T-cell (primary cell): ENCODE measurements at regions of chr1 and their contacts with region 1.

Region 1: GRCh38 chr1:110024613-110025012 is 9.8 kb upstream of the STRIP1 start:
- DNase-seq: no peak
- ATAC-seq: no peak
- H3K4me3 ChIP-seq: no peak overlapping the region
- H3K4me3 Mint-ChIP-seq: no peak overlapping the region
- H3K27ac ChIP-seq: no peak overlapping the region
- H3K27ac Mint-ChIP-seq: no peak overlapping the region
- H3K4me1 ChIP-seq: peaks cover 0 to 3% of the 10 kb centered on the region in 2 experiments
- H3K4me1 Mint-ChIP-seq: peaks cover 0 to 2% (median 1%) of the 10 kb centered on the region in 3 donors
- H3K27me3 ChIP-seq: no peaks in the 10 kb centered on the region
- H3K27me3 Mint-ChIP-seq: no peaks in the 10 kb centered on the region

Region 2: DNA sequence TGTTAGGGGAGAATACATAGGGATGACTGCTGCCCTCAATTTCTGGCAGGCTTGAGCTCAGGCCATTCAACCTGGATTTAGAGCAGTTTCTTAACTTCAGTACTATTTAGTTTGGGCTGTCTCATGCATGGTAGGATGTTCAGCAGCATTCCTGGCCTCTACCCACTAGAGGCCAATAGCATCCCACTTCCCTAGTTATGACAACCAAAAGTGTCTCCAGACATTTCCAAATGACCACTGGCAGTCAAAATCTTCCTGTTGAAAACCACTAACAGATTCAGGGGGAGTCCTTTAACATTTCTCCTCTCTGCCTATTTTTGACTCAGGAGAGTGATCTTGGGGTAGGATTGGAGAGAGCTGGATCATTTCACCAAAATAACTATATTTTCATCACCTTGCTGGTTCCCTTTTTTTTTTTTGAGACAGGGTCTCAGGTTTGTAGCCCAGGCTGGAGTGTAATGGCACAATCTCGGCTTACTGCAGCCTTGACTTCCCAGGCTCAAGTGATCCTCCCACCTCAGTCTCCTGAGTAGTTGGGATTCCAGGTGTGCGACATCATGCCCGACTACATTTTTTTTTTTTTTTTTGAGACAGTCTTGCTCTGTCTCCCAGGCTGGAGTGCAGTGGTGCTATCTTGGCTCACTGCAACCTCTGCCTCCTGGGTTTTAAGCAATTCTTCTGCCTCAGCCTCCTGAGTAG is 413.9 kb before region 1 on chr1:
- CTCF ChIA-PET with region 1: no interaction called
- POLR2A ChIA-PET with region 1: no interaction called
- DNase-seq: no peak
- ATAC-seq: no peak
- H3K4me3 ChIP-seq: no peak overlapping the region
- H3K4me3 Mint-ChIP-seq: no peak overlapping the region
- H3K27ac ChIP-seq: no peak overlapping the region
- H3K27ac Mint-ChIP-seq: no peak overlapping the region
- H3K4me1 ChIP-seq: peaks cover under 1 to 3% of the 10 kb centered on the region in 2 experiments
- H3K4me1 Mint-ChIP-seq: peaks cover 1 to 3% (median 2%) of the 10 kb centered on the region in 3 donors
- H3K27me3 ChIP-seq: no peaks in the 10 kb centered on the region
- H3K27me3 Mint-ChIP-seq: no peaks in the 10 kb centered on the region

Region 3: DNA sequence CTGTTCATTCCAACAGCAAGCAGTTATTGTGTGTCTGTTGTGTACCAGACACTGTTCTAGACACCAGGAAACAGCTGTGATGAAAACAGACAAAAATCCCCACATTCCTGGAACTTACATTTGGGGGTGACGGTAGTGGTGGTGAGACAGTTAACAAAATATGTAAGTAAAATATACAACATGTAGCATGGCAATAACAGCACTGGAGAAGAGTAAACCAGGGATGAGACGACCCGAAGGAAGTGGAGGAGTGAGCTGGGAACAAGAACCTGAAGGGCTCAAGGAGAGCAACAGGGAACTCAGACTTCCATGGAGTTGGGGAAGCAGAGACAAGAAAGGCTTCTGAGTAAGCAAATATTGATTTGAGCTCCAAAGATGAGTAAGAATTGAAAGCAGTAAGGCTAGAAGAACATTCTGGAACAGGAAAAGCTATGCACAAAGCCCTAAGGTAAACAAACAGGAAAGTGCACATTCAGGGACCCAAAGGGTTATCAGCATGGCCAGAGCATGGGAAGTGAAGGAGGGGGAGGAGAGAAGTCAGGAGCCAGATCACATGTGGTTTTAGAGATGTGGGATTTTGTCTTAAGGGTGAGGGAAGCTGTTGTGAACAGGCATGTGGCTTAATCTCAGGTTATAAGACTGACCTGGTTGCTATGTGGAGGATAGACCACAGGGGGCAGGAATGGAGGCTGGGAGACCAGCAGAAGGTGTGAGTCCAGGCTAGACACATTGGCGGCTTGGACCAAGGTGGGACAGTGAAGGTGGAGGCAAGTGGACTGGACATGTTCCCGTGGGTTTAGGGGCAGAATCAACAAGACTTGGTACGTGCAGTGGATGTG is 106.6 kb before region 1 on chr1:
- CTCF ChIA-PET with region 1: no interaction called
- POLR2A ChIA-PET with region 1: no interaction called
- DNase-seq: no peak
- ATAC-seq: no peak
- H3K4me3 ChIP-seq: no peak overlapping the region
- H3K4me3 Mint-ChIP-seq: no peak overlapping the region
- H3K27ac ChIP-seq: no peak overlapping the region
- H3K27ac Mint-ChIP-seq: no peak overlapping the region
- H3K4me1 ChIP-seq: peaks cover 0 to 8% of the 10 kb centered on the region in 2 experiments
- H3K4me1 Mint-ChIP-seq: peaks cover 14 to 19% (median 18%) of the 10 kb centered on the region in 3 donors
- H3K27me3 ChIP-seq: no peaks in the 10 kb centered on the region
- H3K27me3 Mint-ChIP-seq: no peaks in the 10 kb centered on the region

Region 4: DNA sequence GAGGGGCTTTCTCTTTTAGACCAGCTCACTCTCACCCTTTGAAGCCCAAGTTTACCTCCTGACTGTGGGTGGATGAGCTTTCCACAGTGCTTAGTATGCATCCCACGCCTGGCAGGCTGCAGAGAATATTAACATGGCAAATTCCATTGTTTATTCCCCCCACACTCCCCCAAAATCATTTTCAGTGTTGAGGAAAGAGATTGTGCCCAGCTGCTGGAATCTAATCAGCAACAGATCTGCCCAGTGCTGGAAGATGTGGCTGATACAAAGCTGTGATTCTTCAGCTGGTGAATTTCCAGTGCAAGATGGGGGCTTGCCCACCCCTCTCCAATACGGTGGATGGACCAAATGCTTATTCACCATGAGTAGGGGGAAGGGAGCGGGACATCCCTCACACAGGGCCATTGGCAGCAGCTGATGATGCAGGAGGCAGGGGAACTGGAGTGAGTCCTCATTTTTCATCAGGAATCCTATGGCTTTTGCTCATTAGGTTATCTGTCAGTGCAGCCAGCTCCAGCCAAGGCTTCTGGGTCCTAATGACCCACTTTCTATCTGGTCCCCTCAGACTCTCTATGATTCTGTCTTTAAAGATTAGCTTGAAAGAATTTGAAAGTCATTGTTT is 689.9 kb after region 1 on chr1:
- CTCF ChIA-PET with region 1: no interaction called
- POLR2A ChIA-PET with region 1: no interaction called
- DNase-seq: no peak
- ATAC-seq: no peak
- H3K4me3 ChIP-seq: no peak overlapping the region
- H3K4me3 Mint-ChIP-seq: no peak overlapping the region
- H3K27ac ChIP-seq: no peak overlapping the region
- H3K27ac Mint-ChIP-seq: no peak overlapping the region
- H3K4me1 ChIP-seq: peaks cover 0 to 4% of the 10 kb centered on the region in 2 experiments
- H3K4me1 Mint-ChIP-seq: peaks cover 16 to 19% (median 18%) of the 10 kb centered on the region in 3 donors
- H3K27me3 ChIP-seq: no peaks in the 10 kb centered on the region
- H3K27me3 Mint-ChIP-seq: peaks cover 0 to 13% of the 10 kb centered on the region in 2 donors

Region 5: GRCh38 chr1:111157431-111157830 is 1132.8 kb after region 1 on chr1:
- CTCF ChIA-PET with region 1: interaction called in 1 of 2 experiments, 11 read pairs
- POLR2A ChIA-PET with region 1: no interaction called
- DNase-seq: no peak
- ATAC-seq: no peak
- H3K4me3 ChIP-seq: no peak overlapping the region
- H3K4me3 Mint-ChIP-seq: no peak overlapping the region
- H3K27ac ChIP-seq: no peak overlapping the region
- H3K27ac Mint-ChIP-seq: no peak overlapping the region
- H3K4me1 ChIP-seq: no peaks in the 10 kb centered on the region
- H3K4me1 Mint-ChIP-seq: peaks cover 46 to 67% (median 50%) of the 10 kb centered on the region in 3 donors
- H3K27me3 ChIP-seq: no peaks in the 10 kb centered on the region
- H3K27me3 Mint-ChIP-seq: no peaks in the 10 kb centered on the region